GM12878 (cell line): ENCODE measurements at regions of chr6 and their contacts with region 1.

Region 1: DNA sequence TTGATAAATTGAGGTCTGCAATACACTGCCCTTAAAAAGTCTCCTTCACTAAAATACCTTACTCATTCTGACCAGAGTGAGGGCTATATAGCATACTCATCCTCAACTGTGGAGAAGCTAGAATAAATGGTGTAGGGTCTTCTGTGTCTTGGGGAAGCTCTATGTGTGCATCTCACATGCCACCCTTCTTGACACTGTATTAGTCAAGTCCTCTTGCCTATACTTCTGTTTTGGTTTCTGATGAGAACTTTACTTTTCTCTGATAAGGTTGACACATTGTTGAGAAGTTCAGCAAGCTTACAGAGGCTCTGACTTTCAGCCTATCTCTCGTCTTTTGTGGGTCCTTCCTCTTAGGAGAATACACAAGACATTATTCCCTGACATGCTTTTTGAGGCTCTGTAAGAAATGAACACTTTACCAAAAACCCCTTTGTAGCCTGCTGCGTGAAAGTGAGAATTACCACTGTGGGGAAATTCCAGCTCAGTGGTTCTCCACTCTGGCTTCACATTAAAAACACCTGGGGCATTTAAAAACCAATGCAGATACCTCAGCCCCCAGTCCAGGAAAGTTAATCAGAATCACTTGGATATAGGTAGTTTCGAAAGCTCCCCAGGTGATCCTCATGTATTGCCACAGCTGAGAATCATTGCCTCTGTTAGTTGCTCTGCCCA is 372.1 kb upstream of the HS3ST5 start:
- DNase-seq: peak; percentile 37
- ATAC-seq: peak; percentile 68
- H3K4me3 ChIP-seq: no peak overlapping the region
- H3K27ac ChIP-seq: peak overlapping the region; percentile 68; the same call in 1 of the 2 replicates
- H3K4me1 ChIP-seq: peaks cover 13% of the 10 kb centered on the region
- H3K27me3 ChIP-seq: no peaks in the 10 kb centered on the region
- CTCF ChIP-seq: no peak
- EP300 ChIP-seq: peak; percentile 31 to 38; a peak in 1 of 4 replicates
- POLR2A ChIP-seq: no peak
- RAD21 ChIP-seq: no peak

Region 2: DNA sequence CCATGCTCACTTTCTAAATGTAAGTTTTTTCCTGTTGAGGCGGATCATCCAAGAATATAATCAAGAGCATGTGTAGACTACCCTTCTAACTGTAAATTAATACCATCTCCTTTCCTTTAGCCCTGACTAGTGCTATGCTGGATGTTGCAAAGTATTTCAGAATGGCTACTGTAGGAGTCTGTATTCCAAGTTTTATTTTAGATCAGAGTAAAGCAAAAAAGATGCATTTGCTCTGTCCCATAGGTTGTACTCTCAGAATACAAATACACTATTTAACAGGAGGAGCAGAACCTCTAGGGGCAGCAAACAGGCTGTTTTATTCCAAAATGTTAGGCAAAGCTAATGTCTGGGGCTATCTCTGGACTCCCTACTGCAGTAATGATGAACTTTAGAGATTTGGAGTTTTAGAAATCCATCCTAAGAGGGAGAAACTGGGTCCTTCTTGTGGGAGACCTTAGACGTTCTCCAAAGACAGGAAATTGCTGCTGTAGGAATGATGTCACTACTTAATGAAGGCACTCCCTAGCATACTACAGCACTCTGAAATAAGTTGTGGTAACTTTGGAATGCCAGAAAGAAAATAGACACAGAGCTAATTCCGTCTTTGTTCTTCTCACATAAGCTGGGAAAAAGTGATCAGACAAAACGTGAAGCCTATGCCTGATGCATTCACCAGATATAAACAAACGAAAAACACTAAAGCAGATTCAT is 20.2 kb after region 1 on chr6:
- CTCF ChIA-PET with region 1: interaction called, 4 read pairs
- POLR2A ChIA-PET with region 1: no interaction called
- RAD21 ChIA-PET with region 1: interaction called, 4 read pairs
- SMC1A ChIA-PET with region 1: interaction called, 14 read pairs
- in situ Hi-C with region 1: no loop called
- intact Hi-C with region 1: loop called (anchors 1 kb)
- DNase-seq: no peak
- ATAC-seq: peak; percentile 55
- H3K4me3 ChIP-seq: no peak overlapping the region
- H3K27ac ChIP-seq: no peak overlapping the region
- H3K4me1 ChIP-seq: no peaks in the 10 kb centered on the region
- H3K27me3 ChIP-seq: no peaks in the 10 kb centered on the region
- CTCF ChIP-seq: 0 out of 6 replicates have a peak, but pooled peaks of 1 of the 3 experiments have one; percentile 14
- EP300 ChIP-seq: no peak
- POLR2A ChIP-seq: no peak
- RAD21 ChIP-seq: no peak

Region 3: DNA sequence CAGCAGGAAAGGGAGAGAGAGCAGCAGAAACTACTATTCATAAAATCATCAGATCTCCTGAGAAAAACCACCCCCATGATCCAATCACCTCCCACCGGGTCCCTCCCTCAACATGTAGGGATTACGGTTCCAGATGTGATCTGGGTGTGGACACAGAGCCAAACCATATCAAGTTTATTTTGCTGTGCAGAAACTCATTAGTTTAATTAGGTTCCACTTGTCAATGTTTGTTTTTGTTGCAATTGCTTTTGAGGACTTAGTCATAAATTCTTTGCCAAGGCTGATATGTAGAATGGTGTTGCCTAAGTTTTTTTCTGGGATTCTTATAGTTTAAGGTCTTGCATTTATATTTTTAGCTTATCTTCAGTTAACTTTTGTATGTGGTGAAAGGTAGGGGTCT is 49.9 kb after region 1 on chr6:
- CTCF ChIA-PET with region 1: no interaction called
- POLR2A ChIA-PET with region 1: no interaction called
- RAD21 ChIA-PET with region 1: no interaction called
- SMC1A ChIA-PET with region 1: interaction called, 10 read pairs
- in situ Hi-C with region 1: no loop called
- intact Hi-C with region 1: no loop called
- DNase-seq: no peak
- ATAC-seq: no peak
- H3K4me3 ChIP-seq: no peak overlapping the region
- H3K27ac ChIP-seq: no peak overlapping the region
- H3K4me1 ChIP-seq: no peaks in the 10 kb centered on the region
- H3K27me3 ChIP-seq: no peaks in the 10 kb centered on the region
- CTCF ChIP-seq: no peak
- EP300 ChIP-seq: no peak
- POLR2A ChIP-seq: no peak
- RAD21 ChIP-seq: no peak

Region 4: GRCh38 chr6:115838763-115839401 is 1123.9 kb after region 1 on chr6:
- CTCF ChIA-PET with region 1: no interaction called
- POLR2A ChIA-PET with region 1: no interaction called
- RAD21 ChIA-PET with region 1: no interaction called
- SMC1A ChIA-PET with region 1: no interaction called
- in situ Hi-C with region 1: no loop called
- intact Hi-C with region 1: loop called (anchors 10 kb)
- DNase-seq: no peak
- ATAC-seq: peak; percentile 82
- H3K4me3 ChIP-seq: no peak overlapping the region
- H3K27ac ChIP-seq: no peak overlapping the region
- H3K4me1 ChIP-seq: no peaks in the 10 kb centered on the region
- H3K27me3 ChIP-seq: no peaks in the 10 kb centered on the region
- CTCF ChIP-seq: peak; percentile 43 to 62 (median 61)
- EP300 ChIP-seq: no peak
- POLR2A ChIP-seq: no peak
- RAD21 ChIP-seq: peak; percentile 25; the same call in 1 of the 2 replicates